ENCODE measurements at regions of chr11 and their contacts with region 1.

Region 1: GRCh38 chr11:71946144-71946571 is 17.3 kb downstream of the RNF121 start:
- DNase-seq: peak; percentile 76
- H3K4me3 ChIP-seq: no peak overlapping the region
- H3K27ac ChIP-seq: peak overlapping the region; percentile 89
- H3K4me1 ChIP-seq: peaks cover 72% of the 10 kb centered on the region
- H3K27me3 ChIP-seq: no peaks in the 10 kb centered on the region
- CTCF ChIP-seq: no peak
- POLR2A ChIP-seq: peak; percentile 52

Region 2: DNA sequence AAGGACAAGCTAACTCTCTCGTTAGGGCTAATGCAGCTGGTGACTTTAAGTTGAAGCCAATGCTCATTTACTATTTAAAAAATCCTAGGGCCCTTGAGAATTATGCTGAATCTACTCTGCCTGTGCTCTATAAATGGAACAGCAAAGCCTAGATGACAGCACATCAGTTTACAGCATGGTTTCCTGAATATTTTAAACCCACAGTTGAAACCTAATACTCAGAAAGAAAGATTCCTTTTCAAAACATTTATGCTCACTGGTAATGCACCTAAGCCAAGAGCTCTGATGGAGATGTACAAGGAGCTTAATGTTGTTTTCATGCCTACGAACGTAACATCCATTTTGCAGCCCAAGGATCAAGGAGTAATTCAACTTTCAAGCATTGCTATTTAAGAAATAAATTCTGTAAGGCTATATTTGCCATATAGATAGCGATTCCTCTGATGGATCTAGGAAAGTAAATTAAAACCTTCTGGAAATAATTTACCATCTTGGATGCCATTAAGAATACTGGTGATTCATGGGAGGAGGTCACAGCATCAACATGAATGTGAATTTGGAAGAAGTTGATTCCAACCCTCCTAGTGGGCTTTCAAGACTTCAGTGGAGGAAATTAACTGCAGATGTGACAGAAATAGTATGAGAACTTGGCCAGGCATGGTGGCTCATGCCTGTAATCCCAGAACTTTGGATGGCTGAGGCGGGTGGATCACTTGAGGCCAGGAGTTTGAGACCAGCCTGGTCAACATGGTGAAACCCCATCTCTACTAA is 32.2 kb before region 1 on chr11:
- CTCF ChIA-PET with region 1: no interaction called
- POLR2A ChIA-PET with region 1: no interaction called
- dilution Hi-C with region 1: no loop called
- intact Hi-C with region 1: no loop called
- DNase-seq: no peak
- H3K4me3 ChIP-seq: no peak overlapping the region
- H3K27ac ChIP-seq: no peak overlapping the region
- H3K4me1 ChIP-seq: no peaks in the 10 kb centered on the region
- H3K27me3 ChIP-seq: no peaks in the 10 kb centered on the region
- CTCF ChIP-seq: no peak
- POLR2A ChIP-seq: no peak

Region 3: GRCh38 chr11:71928737-71929452 is 17.3 kb before region 1 on chr11 and contains the start of gene RNF121:
- CTCF ChIA-PET with region 1: interaction called, 20 read pairs
- POLR2A ChIA-PET with region 1: interaction called, 17 read pairs
- dilution Hi-C with region 1: no loop called
- intact Hi-C with region 1: no loop called
- DNase-seq: peak; percentile 97
- H3K4me3 ChIP-seq: peak within 1 kb of the TSS; percentile 63 to 95 (median 78)
- H3K27ac ChIP-seq: peak within 1 kb of the TSS; percentile 97
- H3K4me1 ChIP-seq: peaks cover 52% of the 10 kb centered on the region
- H3K27me3 ChIP-seq: no peaks in the 10 kb centered on the region
- CTCF ChIP-seq: no peak
- POLR2A ChIP-seq: no peak
- total RNA-seq, gene RNF121: 61.4 and 61.7 TPM in 2 replicates

Region 4: DNA sequence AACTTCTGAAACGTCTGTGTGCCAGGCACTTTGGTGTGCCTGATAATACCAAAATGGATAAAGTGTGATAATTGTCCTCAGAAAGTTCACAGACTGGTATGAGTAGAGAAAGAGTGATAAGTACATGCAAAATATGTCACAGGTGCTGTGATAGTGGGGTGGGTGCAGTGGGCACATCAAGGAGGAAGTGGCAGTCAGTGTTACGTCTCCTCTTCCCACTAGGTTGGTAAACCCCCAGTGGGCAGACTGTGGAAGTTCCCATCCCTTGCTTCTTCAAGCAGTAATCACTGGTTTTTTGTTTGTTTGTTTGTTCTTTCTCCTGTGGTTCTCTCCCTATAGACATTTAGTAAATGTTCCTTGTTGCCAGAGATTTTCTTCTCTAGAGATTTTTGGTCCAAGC is 11.9 kb before region 1 on chr11:
- CTCF ChIA-PET with region 1: interaction called, 20 read pairs
- POLR2A ChIA-PET with region 1: interaction called, 17 read pairs
- dilution Hi-C with region 1: no loop called
- intact Hi-C with region 1: loop called (anchors 1 kb)
- DNase-seq: no peak
- H3K4me3 ChIP-seq: no peak overlapping the region
- H3K27ac ChIP-seq: peak overlapping the region; percentile 57
- H3K4me1 ChIP-seq: peaks cover 85% of the 10 kb centered on the region
- H3K27me3 ChIP-seq: no peaks in the 10 kb centered on the region
- CTCF ChIP-seq: no peak
- POLR2A ChIP-seq: no peak

Region 5: GRCh38 chr11:71962428-71963038 is 16.4 kb after region 1 on chr11:
- CTCF ChIA-PET with region 1: interaction called, 10 read pairs
- POLR2A ChIA-PET with region 1: interaction called, 3 read pairs
- dilution Hi-C with region 1: no loop called
- intact Hi-C with region 1: loop called (anchors 2 kb)
- DNase-seq: peak; percentile 76
- H3K4me3 ChIP-seq: no peak overlapping the region
- H3K27ac ChIP-seq: peak overlapping the region; percentile 70
- H3K4me1 ChIP-seq: peaks cover 20% of the 10 kb centered on the region
- H3K27me3 ChIP-seq: no peaks in the 10 kb centered on the region
- CTCF ChIP-seq: no peak
- POLR2A ChIP-seq: no peak

Region 6: GRCh38 chr11:72430741-72431570 is 484.8 kb after region 1 on chr11:
- CTCF ChIA-PET with region 1: no interaction called
- POLR2A ChIA-PET with region 1: no interaction called
- dilution Hi-C with region 1: no loop called
- intact Hi-C with region 1: no loop called
- DNase-seq: peak; percentile 52
- H3K4me3 ChIP-seq: no peak overlapping the region
- H3K27ac ChIP-seq: no peak overlapping the region
- H3K4me1 ChIP-seq: peaks cover 4% of the 10 kb centered on the region
- H3K27me3 ChIP-seq: no peaks in the 10 kb centered on the region
- CTCF ChIP-seq: peak; percentile 57 to 79
- POLR2A ChIP-seq: no peak